Colonic mucosa (tissue), 4 donors: ENCODE measurements at regions of chr12 and their contacts with region 1.

Region 1: DNA sequence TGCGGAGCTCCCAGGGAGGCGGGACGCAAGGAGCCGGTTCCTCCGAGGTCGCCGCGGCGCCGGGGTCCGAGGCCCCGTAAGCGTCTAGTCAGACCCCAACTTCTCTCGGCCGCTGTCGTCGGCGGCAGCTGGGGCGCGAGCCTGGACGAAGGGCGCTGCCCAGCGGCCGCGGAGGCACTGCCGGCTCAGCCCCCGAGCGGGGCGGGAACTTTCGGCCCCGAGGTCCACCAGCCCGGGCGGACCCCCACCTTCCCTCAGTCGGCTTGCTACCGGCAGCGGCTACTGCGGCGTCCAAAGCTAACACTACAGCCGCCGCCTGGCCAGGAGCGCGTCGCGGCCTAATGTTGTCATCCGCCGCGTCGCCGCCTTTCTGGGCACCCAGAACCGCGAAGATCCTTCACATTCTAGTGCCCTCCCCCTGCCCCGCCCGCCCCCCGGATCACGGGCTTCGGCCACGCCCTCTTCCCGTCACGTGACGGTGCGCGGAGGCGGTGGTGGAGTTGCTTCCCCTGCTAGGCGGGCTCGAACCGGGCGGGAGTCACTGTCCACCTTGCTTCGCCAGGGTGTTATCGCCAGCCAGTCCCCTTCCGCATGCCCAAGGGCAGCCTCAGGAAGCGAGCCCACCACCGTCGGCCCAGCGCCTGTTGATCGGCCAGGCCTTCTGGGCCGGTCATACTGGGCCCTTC is at the start of gene OSBPL8:
- DNase-seq: peak; percentile 98
- H3K4me3 ChIP-seq: peak within 1 kb of the TSS; percentile 95
- H3K27ac ChIP-seq: peak within 1 kb of the TSS; percentile 85
- H3K4me1 ChIP-seq: no peaks in the 10 kb centered on the region
- H3K27me3 ChIP-seq: no peaks in the 10 kb centered on the region
- CTCF ChIP-seq: no peak
- total RNA-seq, gene OSBPL8: 25.9 to 32.8 TPM

Region 2: GRCh38 chr12:76348079-76348901 is 211.3 kb before region 1 on chr12 and contains the start of gene BBS10:
- intact Hi-C with region 1: loop called (anchors 10 kb)
- DNase-seq: peak; percentile 91
- H3K4me3 ChIP-seq: peak within 1 kb of the TSS; percentile 47
- H3K27ac ChIP-seq: peak within 1 kb of the TSS; percentile 79
- H3K4me1 ChIP-seq: no peaks in the 10 kb centered on the region
- H3K27me3 ChIP-seq: no peaks in the 10 kb centered on the region
- CTCF ChIP-seq: no peak
- total RNA-seq, gene BBS10: 3.2 to 3.3 TPM

Region 3: GRCh38 chr12:76462668-76463224 is 96.8 kb before region 1 on chr12:
- intact Hi-C with region 1: loop called (anchors 10 kb)
- DNase-seq: no peak
- H3K4me3 ChIP-seq: no peak overlapping the region
- H3K27ac ChIP-seq: no peak overlapping the region
- H3K4me1 ChIP-seq: no peaks in the 10 kb centered on the region
- H3K27me3 ChIP-seq: no peaks in the 10 kb centered on the region
- CTCF ChIP-seq: no peak

Region 4: GRCh38 chr12:76489737-76490136 is 69.8 kb before region 1 on chr12:
- intact Hi-C with region 1: no loop called
- DNase-seq: no peak
- H3K4me3 ChIP-seq: no peak overlapping the region
- H3K27ac ChIP-seq: no peak overlapping the region
- H3K4me1 ChIP-seq: no peaks in the 10 kb centered on the region
- H3K27me3 ChIP-seq: no peaks in the 10 kb centered on the region
- CTCF ChIP-seq: no peak